Naive thymus-derived CD8-positive, alpha-beta T cell (primary cell): ENCODE measurements at regions of chr6 and their contacts with region 1.

Region 1: GRCh38 chr6:127980996-127981395 is 80.1 kb upstream of the THEMIS start:
- DNase-seq: no peak
- ATAC-seq: peak; percentile 3 to 7
- H3K4me3 Mint-ChIP-seq: peak overlapping the region; percentile 17 to 92 (median 74)
- H3K27ac Mint-ChIP-seq: peak overlapping the region in 9 of 10 donors; percentile 15 to 97 (median 85)
- H3K4me1 Mint-ChIP-seq: peaks cover 31 to 69% (median 62%) of the 10 kb centered on the region in 4 donors
- H3K27me3 Mint-ChIP-seq: no peaks in the 10 kb centered on the region

Region 2: DNA sequence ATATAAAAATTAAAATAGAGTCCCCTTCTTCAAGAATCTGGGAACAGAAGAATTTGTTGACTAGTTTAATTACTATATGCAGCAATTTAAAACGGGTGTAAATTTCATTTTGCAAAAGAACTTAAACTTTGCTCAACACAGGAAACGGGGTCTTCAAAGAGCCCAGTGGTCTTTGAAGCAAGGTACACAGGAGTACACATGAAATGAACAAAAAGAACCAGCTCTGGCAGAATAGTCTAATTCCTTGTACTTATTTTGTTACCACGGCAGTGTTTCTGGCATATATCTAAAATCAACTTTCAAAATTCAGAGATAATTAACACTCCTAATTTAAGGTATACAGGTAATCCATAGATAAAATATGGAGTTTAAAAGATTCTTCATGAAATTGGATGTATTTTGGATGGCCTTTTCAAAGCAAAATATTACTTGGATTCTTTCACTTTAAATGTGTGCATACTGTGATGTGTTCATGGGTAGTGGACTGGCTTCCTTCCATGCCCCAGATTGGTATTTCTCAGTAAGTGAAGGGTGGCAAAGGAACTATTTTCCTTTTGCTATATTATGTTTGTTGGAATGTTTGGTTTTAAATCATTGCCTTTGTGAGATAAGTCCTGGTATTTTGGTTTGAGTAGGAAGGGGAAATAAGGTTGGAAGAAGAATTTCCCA is 16.6 kb after region 1 on chr6:
- POLR2A ChIA-PET with region 1: interaction called, 37 read pairs
- DNase-seq: peak in 7 of 10 donors; percentile 16 to 76 (median 54)
- ATAC-seq: peak; percentile 77 to 90
- H3K4me3 Mint-ChIP-seq: peak overlapping the region; percentile 59 to 90 (median 84)
- H3K27ac Mint-ChIP-seq: peak overlapping the region; percentile 83 to 98 (median 94)
- H3K4me1 Mint-ChIP-seq: peaks cover 29 to 69% (median 64%) of the 10 kb centered on the region in 4 donors
- H3K27me3 Mint-ChIP-seq: no peaks in the 10 kb centered on the region

Region 3: DNA sequence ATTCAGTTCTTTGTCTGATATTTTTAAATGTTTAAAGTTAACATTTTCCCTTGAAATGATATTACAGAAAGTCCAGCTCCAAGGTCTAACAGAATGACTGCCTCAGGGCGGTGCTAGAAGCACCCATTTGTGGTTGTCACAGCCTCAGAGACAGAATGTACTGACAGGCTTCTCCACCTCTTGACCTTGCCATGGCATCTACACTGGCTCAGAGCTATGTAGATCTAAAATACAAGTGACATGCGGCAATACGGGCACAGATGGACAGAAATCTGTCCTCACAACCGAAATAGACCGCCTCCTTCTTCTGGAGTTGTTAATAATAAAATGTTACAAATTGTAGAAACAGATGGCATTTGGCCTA is 87.1 kb after region 1 on chr6:
- POLR2A ChIA-PET with region 1: no interaction called
- DNase-seq: no peak
- ATAC-seq: no peak
- H3K4me3 Mint-ChIP-seq: no peak overlapping the region
- H3K27ac Mint-ChIP-seq: no peak overlapping the region
- H3K4me1 Mint-ChIP-seq: peaks cover 9 to 18% (median 12%) of the 10 kb centered on the region in 4 donors
- H3K27me3 Mint-ChIP-seq: no peaks in the 10 kb centered on the region